A673 (cell line): ENCODE measurements at regions of chr2 and their contacts with region 1.

Region 1: GRCh38 chr2:111897924-111898702 is at the start of gene MERTK:
- DNase-seq: peak; percentile 88
- H3K4me3 ChIP-seq: peak within 1 kb of the TSS; percentile 99
- H3K27ac ChIP-seq: peak within 1 kb of the TSS; percentile 73
- H3K4me1 ChIP-seq: peaks cover 35% of the 10 kb centered on the region
- H3K27me3 ChIP-seq: no peaks in the 10 kb centered on the region
- CTCF ChIP-seq: peak; percentile 59
- total RNA-seq, gene MERTK: 18.4 and 20.1 TPM in 2 replicates

Region 2: DNA sequence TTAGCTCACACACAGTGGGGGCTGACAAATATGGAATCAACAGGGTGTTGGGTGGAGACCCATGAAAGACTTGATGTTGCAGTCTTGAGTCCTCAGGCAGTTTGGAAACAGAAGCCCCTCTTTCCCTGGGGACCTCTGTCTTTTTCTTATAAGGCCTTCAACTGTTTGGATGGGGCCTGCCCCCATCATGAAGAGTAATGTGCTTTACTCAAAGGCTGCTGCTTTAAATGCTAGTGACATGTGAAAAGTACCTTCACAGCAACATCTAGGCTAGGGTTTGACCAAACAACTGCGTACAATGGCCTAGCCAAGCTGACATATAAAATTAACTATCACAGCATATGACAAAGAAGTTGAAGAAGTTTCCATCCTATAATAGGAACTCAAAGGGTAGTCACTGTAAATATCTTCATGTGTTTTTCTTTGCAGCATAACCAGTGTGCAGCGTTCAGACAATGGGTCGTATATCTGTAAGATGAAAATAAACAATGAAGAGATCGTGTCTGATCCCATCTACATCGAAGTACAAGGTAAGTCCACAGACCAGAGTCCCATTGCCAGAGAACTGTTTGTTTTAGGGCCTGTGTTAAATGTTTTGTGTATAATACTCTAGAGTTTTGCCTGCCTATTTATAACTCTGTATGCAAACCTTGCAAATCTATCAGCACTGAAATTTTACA is 46.6 kb after region 1 on chr2:
- CTCF ChIA-PET with region 1: no interaction called
- POLR2A ChIA-PET with region 1: no interaction called
- intact Hi-C with region 1: loop called (anchors 5 kb)
- DNase-seq: peak; percentile 35
- H3K4me3 ChIP-seq: no peak overlapping the region
- H3K27ac ChIP-seq: no peak overlapping the region
- H3K4me1 ChIP-seq: peaks cover 52% of the 10 kb centered on the region
- H3K27me3 ChIP-seq: no peaks in the 10 kb centered on the region
- CTCF ChIP-seq: no peak

Region 3: GRCh38 chr2:112048887-112049286 is 150.8 kb after region 1 on chr2:
- CTCF ChIA-PET with region 1: no interaction called
- POLR2A ChIA-PET with region 1: no interaction called
- intact Hi-C with region 1: loop called (anchors 2 kb)
- DNase-seq: peak; percentile 79
- H3K4me3 ChIP-seq: no peak overlapping the region
- H3K27ac ChIP-seq: no peak overlapping the region
- H3K4me1 ChIP-seq: peaks cover 13% of the 10 kb centered on the region
- H3K27me3 ChIP-seq: no peaks in the 10 kb centered on the region
- CTCF ChIP-seq: peak; percentile 85

Region 4: DNA sequence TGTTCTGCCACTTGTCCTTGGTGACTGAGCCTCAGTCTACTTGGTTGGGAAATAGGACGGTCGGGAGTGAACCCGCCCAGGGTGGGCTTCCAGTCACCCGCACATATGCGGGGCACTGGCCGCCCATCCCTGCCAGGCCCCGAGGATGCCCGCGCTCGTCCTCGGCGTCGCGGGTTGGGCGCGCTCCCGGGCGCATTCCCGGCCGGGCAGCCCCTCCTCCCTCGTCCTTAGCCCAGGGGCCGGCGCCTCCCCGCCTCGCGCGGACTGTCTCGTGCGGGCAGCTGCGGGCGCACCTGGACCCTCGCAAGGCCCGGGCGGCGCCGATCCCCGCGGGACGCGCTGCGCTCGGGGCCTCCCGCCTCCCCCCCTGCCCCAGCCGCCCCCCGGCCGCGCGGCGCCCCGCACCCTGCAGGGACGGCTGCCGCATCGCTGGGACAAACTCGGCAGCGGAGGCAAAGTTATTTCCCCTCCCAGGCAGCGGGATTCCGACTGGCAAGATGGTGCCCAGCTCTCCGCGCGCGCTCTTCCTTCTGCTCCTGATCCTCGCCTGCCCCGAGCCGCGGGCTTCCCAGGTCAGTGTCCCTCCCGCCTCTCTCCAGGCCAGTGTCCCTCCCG is 240.2 kb after region 1 on chr2 and contains the start of gene FBLN7:
- CTCF ChIA-PET with region 1: no interaction called
- POLR2A ChIA-PET with region 1: no interaction called
- intact Hi-C with region 1: no loop called
- DNase-seq: peak; percentile 46
- H3K4me3 ChIP-seq: peak within 1 kb of the TSS; percentile 50
- H3K27ac ChIP-seq: no peak within 1 kb of the TSS
- H3K4me1 ChIP-seq: peaks cover 6% of the 10 kb centered on the region
- H3K27me3 ChIP-seq: no peaks in the 10 kb centered on the region
- CTCF ChIP-seq: no peak
- total RNA-seq, gene FBLN7: 4.1 and 5.1 TPM in 2 replicates

Region 5: DNA sequence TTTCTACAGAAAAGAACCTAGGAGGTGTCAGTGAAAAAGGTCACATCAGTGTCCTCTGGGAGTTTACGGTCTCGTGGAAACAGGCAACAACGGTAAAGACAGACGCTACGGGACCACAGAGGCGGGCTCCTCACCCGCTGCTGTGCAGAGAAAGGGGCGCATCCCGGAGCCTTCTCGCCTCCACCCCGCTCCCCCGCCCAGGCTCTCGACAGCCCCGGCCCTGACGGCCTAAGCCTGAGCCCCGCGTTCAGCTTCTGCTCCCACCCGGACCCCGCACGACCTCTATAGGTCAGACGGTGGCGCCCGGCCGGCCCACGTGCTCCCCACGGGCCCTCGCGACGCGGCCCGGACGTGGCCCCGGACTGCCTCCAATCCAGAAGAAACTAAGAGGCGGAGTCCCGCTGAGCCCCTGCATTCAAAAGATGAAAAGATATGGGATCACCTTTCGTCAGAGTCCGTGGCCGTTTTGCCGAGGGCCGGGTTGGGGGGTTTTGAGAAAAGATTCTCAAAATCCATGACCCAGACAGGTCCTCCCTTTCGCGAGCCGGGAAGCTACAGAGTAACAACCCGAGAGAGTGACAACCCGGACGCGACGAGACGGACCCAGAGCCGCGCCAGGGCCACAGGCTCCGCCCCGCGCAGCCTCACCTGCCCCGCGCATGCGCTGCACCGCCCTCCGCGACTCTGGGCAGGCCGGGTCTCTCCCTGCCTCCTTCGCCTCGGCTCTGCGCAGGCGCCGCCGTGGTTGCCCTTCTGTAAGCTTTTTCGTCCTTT is 356.5 kb after region 1 on chr2 and contains the start of gene ZC3H8:
- CTCF ChIA-PET with region 1: no interaction called
- POLR2A ChIA-PET with region 1: no interaction called
- intact Hi-C with region 1: loop called (anchors 10 kb)
- DNase-seq: peak; percentile 96
- H3K4me3 ChIP-seq: peak within 1 kb of the TSS; percentile 68
- H3K27ac ChIP-seq: peak within 1 kb of the TSS; percentile 59
- H3K4me1 ChIP-seq: peaks cover 9% of the 10 kb centered on the region
- H3K27me3 ChIP-seq: no peaks in the 10 kb centered on the region
- CTCF ChIP-seq: no peak
- total RNA-seq, gene ZC3H8: 19.7 and 23.2 TPM in 2 replicates